ENCODE measurements at regions of chr11 and their contacts with region 1.

Region 1: DNA sequence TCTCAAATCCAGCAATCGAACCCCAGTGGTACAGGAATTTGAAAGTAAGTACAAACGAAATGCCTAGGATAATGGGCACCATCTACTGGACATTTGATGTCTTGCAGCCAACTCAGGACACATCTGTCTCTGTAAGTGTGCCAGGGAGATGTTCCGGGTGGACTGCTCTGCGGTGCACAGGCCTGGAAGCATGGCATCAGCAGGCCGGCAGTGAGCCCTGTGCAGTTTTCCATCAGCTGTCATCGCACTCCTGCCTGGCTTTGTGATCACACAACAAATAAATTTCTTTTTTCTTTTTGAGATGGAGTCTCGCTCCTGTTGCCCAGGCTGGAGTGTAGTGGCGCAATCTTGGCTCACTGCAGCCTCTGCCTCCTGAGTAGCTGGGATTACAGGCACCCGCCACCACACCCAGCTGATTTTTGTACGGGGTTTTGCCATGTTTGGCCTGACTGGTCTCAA is 71.0 kb downstream of the JAM3 start:
- DNase-seq: peak; percentile 58
- H3K4me3 ChIP-seq: no peak overlapping the region
- H3K27ac ChIP-seq: no peak overlapping the region
- H3K4me1 ChIP-seq: no peaks in the 10 kb centered on the region
- H3K27me3 ChIP-seq: no peaks in the 10 kb centered on the region
- CTCF ChIP-seq: peak; percentile 90 to 97

Region 2: DNA sequence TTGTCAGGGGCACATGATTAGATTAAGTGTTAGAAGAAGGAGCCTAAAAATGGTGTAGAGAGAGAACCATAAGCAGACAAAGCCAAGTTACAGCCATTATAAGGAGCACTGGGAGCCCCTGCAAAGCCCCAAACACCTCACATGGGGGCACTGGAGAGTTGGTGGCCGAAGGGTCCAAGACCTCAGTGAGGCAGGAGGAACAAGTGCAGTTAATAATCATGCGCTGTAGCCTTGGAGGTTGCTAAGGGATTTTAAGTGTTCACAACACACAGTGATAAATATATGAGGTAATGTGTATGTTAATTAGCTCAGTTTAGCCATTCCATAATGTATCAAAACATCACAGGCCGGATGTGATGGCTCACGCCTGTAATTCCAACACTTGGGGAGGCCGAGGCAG is 125.4 kb before region 1 on chr11:
- CTCF ChIA-PET with region 1: interaction called, 13 read pairs
- dilution Hi-C with region 1: no loop called
- in situ Hi-C with region 1: no loop called
- intact Hi-C with region 1: no loop called
- DNase-seq: no peak
- H3K4me3 ChIP-seq: no peak overlapping the region
- H3K27ac ChIP-seq: no peak overlapping the region
- H3K4me1 ChIP-seq: no peaks in the 10 kb centered on the region
- H3K27me3 ChIP-seq: no peaks in the 10 kb centered on the region
- CTCF ChIP-seq: peak in 1 of 2 donors; percentile 19

Region 3: GRCh38 chr11:134098566-134099184 is 41.2 kb before region 1 on chr11:
- CTCF ChIA-PET with region 1: no interaction called
- dilution Hi-C with region 1: no loop called
- in situ Hi-C with region 1: no loop called
- intact Hi-C with region 1: loop called (anchors 1 kb)
- DNase-seq: peak; percentile 11
- H3K4me3 ChIP-seq: no peak overlapping the region
- H3K27ac ChIP-seq: no peak overlapping the region
- H3K4me1 ChIP-seq: no peaks in the 10 kb centered on the region
- H3K27me3 ChIP-seq: no peaks in the 10 kb centered on the region
- CTCF ChIP-seq: peak in 1 of 2 donors; percentile 57

Region 4: GRCh38 chr11:134181707-134182106 is 41.8 kb after region 1 on chr11:
- CTCF ChIA-PET with region 1: no interaction called
- dilution Hi-C with region 1: no loop called
- in situ Hi-C with region 1: no loop called
- intact Hi-C with region 1: no loop called
- DNase-seq: peak; percentile 29
- H3K4me3 ChIP-seq: no peak overlapping the region
- H3K27ac ChIP-seq: no peak overlapping the region
- H3K4me1 ChIP-seq: no peaks in the 10 kb centered on the region
- H3K27me3 ChIP-seq: no peaks in the 10 kb centered on the region
- CTCF ChIP-seq: no peak